Dendritic cell treated with granulocyte-macrophage colony-stimulating factor and Interleukin-4, amounts not matched to agents 40 ng/mL and 50 ng/mL, for 4 days (primary cell): ENCODE measurements at regions of chr4 and their contacts with region 1.

Region 1: DNA sequence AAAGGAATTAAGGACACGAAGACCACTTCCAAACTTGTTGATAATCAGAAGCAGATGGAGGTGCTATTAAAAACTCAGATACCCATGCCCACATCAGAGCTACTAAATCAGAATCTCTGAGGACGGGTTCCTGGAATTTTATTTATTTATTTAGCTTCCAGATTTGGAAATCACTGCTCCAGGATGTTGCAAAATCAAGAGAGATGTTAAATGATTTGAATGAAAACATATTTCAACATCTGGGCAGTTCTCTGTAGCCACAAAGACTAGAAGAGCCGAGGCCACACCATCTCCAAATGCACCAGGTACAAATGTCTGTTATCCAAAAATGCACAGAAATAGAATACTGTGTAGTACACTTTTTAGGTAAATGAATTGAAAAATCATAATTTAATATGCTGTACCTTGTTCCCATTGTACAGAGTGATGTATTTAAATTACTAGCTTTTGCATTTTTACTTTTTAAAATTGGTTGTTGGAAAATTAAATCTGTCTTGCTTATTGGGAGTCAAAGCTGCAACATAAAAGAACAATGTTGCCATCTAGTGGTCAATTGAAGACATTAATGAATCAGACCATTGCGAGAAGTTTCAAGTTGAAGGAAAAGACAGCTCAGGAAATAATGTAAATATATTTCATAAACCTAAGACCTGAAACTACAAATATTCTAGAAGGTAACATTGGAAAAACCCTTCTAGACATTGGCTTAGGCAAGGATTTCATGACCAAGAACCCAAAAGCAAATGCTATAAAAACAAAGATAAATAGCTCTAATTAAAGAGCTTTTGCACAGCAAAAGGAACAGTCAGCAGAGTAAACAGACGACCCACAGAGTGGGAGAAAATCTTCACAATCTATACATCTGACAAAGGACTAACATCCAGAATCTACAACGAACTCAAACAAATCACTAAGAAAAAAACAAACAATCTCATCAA is 151.3 kb upstream of the TTC29 start:
- H3K4me3 Mint-ChIP-seq: no peak overlapping the region
- H3K27ac Mint-ChIP-seq: no peak overlapping the region
- H3K4me1 Mint-ChIP-seq: no peaks in the 10 kb centered on the region
- H3K27me3 Mint-ChIP-seq: peaks cover 2% of the 10 kb centered on the region

Region 2: DNA sequence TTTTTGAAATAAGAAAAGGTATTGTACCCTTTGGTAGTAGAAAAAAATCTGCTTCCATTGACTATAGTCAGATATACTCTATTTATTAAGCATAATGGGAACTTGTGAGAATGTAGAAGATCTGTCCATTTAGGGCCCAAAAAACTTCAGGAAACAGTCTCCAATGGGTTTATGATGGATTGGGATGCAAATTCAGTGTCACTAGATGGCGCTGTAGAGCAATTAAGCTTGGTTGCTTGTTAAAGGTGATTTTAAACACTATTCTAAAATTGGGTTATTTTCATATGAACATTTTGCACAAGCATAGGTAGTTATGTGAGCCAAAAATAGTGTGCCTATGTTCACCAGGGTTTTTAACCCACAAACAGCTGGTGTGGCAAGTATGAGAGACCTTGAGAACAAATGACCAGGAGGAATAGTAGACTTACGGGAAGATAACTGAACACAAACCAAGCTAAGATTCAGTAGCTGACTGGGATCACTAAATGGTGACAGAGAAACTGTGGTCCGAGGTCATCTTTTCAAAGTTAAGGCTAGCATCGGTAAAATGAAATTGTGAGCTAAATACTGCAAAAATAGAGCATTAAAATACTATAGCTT is 1001.7 kb before region 1 on chr4:
- intact Hi-C with region 1: loop called (anchors 2 kb)
- H3K4me3 Mint-ChIP-seq: no peak overlapping the region
- H3K27ac Mint-ChIP-seq: no peak overlapping the region
- H3K4me1 Mint-ChIP-seq: peaks cover 15% of the 10 kb centered on the region
- H3K27me3 Mint-ChIP-seq: peaks cover 6% of the 10 kb centered on the region

Region 3: DNA sequence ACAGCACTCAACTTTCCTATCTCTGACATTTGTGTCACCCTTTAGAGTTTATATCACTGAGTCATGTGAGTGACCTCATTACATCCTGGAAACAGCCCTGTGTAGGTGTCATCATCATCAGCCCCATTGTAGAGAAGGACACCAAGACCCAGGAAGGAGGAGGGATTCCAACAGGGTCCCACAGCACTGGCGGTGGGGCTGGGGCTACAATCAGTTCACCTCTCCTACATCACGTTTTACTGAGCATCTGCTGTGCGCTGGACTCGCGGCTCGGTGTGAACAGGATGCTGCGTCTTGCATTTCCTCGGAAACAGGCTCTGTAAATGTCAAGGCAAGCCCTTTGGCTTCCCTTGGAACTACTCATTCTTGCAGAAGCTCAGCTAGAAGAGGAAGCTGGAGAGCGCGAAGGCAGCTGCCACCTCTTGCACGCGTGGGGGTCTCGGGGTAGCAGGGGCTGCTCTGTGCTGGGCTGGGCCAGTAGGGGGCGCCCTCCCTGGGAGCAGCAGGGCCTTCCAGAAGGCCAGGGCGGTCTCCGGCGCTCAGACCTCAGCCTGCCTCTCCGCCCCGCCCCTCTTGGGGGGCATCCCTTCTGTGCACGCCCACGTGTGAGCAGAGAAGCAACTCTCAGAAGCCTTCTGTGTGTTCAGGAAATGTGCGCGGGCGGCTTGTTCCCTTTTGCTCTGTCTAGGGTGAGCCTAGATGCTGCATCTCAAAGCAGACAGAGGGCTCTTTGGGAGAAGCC is 853.6 kb before region 1 on chr4:
- intact Hi-C with region 1: loop called (anchors 2 kb)
- H3K4me3 Mint-ChIP-seq: peak overlapping the region; percentile 20
- H3K27ac Mint-ChIP-seq: peak overlapping the region; percentile 75
- H3K4me1 Mint-ChIP-seq: peaks cover 43% of the 10 kb centered on the region
- H3K27me3 Mint-ChIP-seq: peaks cover 14% of the 10 kb centered on the region

Region 4: DNA sequence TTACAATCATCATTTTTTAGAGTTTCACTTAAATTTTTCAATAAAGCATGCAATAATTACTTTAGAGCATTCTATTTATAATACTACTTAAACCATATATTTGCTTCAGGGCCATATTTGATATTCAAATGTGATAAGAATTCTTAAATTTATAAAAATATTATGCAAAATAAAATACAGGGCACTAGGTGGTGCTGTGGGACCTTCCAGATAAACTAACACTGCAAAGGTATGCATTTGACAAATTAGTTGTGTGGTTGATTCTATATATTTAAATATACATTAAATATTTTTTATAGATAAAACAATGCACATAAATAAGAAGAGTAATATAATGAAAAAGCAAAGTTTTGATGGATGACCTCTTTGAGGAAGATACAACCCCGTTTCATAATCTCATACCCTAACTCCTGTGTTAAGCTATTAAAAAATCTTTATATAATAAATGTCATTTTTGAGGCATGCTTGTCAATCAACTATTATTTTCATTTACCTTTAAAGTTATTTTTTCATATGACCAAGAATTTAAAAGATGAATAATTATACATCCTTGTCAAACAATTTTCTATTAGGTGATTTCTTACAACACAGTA is 754.2 kb before region 1 on chr4:
- intact Hi-C with region 1: loop called (anchors 2 kb)
- H3K4me3 Mint-ChIP-seq: no peak overlapping the region
- H3K27ac Mint-ChIP-seq: no peak overlapping the region
- H3K4me1 Mint-ChIP-seq: no peaks in the 10 kb centered on the region
- H3K27me3 Mint-ChIP-seq: no peaks in the 10 kb centered on the region

Region 5: DNA sequence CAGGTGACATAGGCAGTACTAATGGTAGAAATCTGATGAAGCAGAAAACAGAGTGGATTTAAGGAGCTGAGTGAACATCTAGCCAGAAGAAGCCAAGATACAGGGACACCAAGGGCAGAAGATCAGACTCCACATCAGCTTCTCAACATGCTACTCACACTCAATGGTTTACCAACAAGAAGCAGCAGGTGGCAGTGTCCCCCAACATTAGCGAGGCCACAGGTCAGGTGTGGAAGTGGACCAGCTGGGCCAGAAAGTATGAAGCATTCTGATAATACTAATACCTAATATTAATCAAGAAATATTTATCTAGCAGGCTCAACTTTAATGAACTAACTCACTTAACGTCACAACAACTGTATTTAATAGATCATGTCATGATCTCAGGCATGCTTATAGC is 77.9 kb before region 1 on chr4:
- intact Hi-C with region 1: loop called (anchors 2 kb)
- H3K4me3 Mint-ChIP-seq: no peak overlapping the region
- H3K27ac Mint-ChIP-seq: no peak overlapping the region
- H3K4me1 Mint-ChIP-seq: no peaks in the 10 kb centered on the region
- H3K27me3 Mint-ChIP-seq: no peaks in the 10 kb centered on the region